AG04450 (cell line): ENCODE measurements at regions of chr20 and their contacts with region 1.

Region 1: DNA sequence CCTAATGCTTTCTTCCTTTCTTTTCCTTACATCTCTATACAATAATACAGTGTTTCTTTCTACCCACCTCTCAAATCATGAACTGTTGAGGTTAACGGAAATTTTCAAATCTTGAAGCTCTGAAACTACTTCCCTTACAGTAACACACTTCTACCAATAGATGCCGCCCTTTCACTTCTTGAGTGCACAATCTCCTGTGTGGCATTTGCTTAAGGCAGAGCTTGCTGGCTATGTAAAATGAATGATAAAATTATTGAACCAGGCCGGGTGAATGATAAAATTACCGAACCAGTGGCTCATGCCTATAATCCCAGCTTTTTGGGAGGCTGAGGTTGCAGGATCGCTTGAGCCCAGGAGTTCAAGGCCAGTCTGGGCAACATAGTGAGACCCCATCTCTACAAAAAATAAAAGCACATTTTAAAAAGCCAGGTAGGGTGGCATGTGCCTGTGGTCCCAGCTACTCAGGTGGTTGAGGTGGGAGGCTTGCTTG is 56.8 kb downstream of the KCNS1 start:
- DNase-seq: peak; percentile 55
- H3K4me3 ChIP-seq: no peak overlapping the region
- H3K27ac ChIP-seq: no peak overlapping the region
- H3K27me3 ChIP-seq: no peaks in the 10 kb centered on the region
- CTCF ChIP-seq: peak; percentile 94

Region 2: GRCh38 chr20:45011108-45011526 is 33.0 kb before region 1 on chr20:
- CTCF ChIA-PET with region 1: interaction called, 63 read pairs
- POLR2A ChIA-PET with region 1: interaction called, 6 read pairs
- DNase-seq: peak; percentile 39
- H3K4me3 ChIP-seq: no peak overlapping the region
- H3K27ac ChIP-seq: peak overlapping the region; percentile 76
- H3K27me3 ChIP-seq: no peaks in the 10 kb centered on the region
- CTCF ChIP-seq: peak; percentile 76

Region 3: DNA sequence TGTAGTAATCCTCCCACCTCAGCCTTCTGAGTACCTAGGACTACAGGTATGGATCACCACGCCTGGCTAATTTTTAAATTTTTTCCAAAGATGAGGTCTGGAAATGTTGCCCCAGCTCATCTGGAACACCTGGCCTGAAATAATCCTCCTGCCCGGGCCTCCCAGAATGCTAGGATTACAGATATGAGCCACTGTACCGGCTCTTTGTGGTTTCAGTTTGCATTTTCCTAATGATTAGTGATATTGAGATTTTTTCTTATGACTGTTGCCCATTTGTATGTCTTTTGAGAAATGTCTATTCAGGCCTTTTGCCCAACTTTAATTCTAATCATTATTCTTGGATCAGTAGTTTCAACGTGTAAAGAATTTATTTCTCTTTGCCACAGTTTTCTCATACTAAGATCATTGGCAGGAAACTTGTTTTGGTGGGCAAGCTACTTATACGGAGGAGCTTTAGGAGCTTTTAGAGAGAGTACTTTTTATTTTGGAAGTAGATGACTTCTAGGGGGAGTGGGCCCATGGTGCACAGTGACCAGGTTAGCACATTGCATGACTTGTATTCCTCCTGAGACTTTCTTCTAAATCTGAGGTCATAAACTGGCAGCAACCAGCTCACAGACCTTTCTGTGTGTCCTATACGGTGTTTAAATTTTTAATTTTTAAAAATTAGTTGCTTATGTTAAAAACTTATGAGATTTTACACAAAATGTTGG is 15.5 kb before region 1 on chr20:
- CTCF ChIA-PET with region 1: interaction called, 17 read pairs
- POLR2A ChIA-PET with region 1: no interaction called
- DNase-seq: no peak
- H3K4me3 ChIP-seq: no peak overlapping the region
- H3K27ac ChIP-seq: no peak overlapping the region
- H3K27me3 ChIP-seq: no peaks in the 10 kb centered on the region
- CTCF ChIP-seq: no peak

Region 4: GRCh38 chr20:45070932-45071632 is 27.0 kb after region 1 on chr20:
- CTCF ChIA-PET with region 1: interaction called, 32 read pairs
- POLR2A ChIA-PET with region 1: no interaction called
- DNase-seq: no peak
- H3K4me3 ChIP-seq: no peak overlapping the region
- H3K27ac ChIP-seq: no peak overlapping the region
- H3K27me3 ChIP-seq: no peaks in the 10 kb centered on the region
- CTCF ChIP-seq: no peak

Region 5: GRCh38 chr20:45104786-45105185 is 60.7 kb after region 1 on chr20:
- CTCF ChIA-PET with region 1: interaction called, 62 read pairs
- POLR2A ChIA-PET with region 1: no interaction called
- DNase-seq: no peak
- H3K4me3 ChIP-seq: no peak overlapping the region
- H3K27ac ChIP-seq: no peak overlapping the region
- H3K27me3 ChIP-seq: peaks cover 22% of the 10 kb centered on the region
- CTCF ChIP-seq: no peak

Region 6: DNA sequence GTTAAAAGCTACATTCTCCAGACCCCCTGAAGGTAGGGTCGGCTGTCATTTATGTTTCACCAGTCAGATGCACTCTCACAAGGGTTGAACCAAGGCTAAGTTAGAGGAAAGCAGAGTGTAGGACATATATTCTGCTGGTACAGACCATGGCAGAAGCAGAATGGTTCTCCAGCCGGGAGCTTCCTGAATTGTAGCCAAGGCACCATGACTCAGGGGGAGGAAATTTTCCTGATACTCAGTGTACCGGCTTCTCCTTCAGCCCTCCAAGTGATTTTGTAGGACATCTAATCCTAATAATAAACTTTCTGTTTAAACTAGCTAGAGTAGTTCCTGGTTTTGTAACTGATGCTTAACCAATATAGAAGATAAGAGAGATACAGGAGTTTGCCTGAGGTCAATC is 224.4 kb after region 1 on chr20:
- CTCF ChIA-PET with region 1: no interaction called
- POLR2A ChIA-PET with region 1: no interaction called
- DNase-seq: no peak
- H3K4me3 ChIP-seq: no peak overlapping the region
- H3K27ac ChIP-seq: no peak overlapping the region
- H3K27me3 ChIP-seq: peaks cover 8% of the 10 kb centered on the region
- CTCF ChIP-seq: no peak

Region 7: DNA sequence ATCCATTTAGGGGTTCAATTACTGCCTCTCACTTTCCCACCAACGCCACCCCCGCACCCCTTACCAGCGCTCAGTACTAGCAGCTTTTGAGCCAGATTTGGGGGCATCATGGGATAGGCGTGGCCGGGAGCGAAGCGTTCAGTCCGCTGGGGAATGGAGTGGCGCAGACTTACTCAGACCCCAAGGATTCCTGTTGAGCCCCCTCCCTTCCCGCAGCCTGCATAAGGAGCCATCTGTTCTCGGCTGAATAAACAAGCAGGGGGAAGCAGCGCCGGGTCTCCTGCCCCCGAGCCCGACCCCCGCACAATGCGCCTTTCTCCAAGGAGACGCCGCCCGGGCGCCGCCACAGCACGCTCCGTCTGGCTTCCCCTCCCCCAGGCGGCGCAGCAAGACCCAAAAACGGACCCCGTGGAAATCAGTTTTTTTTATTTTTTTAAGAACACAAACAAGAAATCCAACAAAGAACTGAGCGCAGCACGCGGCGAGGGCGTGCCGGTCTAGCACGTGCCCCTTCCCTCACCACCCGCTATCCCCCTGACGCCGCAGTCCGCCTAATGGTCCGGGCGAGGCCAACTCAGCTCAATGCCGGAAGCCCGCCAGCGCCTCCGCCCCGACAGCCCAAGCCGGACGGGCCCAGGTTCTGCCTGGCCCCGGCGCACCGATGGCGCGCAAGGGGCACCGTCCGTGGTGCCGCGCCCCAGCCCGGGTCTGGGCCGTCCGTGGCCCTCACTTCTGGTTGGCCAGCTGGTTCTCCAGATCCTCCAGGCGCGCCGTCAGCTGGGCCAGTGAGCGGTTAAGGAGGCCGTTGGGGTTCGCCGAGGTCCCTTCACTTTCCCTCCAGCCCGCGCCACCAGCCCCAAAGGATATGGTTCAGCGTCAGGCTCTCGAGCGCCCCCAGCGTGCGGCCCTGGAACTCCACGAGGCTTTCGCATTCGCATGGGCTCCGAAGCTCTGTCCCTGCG is 249.2 kb after region 1 on chr20:
- CTCF ChIA-PET with region 1: interaction called, 171 read pairs
- POLR2A ChIA-PET with region 1: no interaction called
- DNase-seq: no peak
- H3K4me3 ChIP-seq: peak overlapping the region; percentile 58
- H3K27ac ChIP-seq: no peak overlapping the region
- H3K27me3 ChIP-seq: peaks cover 19% of the 10 kb centered on the region
- CTCF ChIP-seq: peak; percentile 94